Activated CD8-positive, alpha-beta memory T cell treated with anti-CD3 and anti-CD28 coated beads, Interleukin-2, amount 10 ng/mL, durations not matched to agents 7 days and 5 days (primary cell): ENCODE measurements at regions of chr1 and their contacts with region 1.

Region 1: GRCh38 chr1:43934101-43934985 is 742 bp downstream of the ARTN start:
- DNase-seq: peak; percentile 72
- ATAC-seq: peak; percentile 62
- H3K4me3 Mint-ChIP-seq: no peak overlapping the region
- H3K27ac Mint-ChIP-seq: peak overlapping the region; percentile 20
- H3K4me1 Mint-ChIP-seq: peaks cover 4% of the 10 kb centered on the region
- H3K27me3 Mint-ChIP-seq: peaks cover 24% of the 10 kb centered on the region

Region 2: DNA sequence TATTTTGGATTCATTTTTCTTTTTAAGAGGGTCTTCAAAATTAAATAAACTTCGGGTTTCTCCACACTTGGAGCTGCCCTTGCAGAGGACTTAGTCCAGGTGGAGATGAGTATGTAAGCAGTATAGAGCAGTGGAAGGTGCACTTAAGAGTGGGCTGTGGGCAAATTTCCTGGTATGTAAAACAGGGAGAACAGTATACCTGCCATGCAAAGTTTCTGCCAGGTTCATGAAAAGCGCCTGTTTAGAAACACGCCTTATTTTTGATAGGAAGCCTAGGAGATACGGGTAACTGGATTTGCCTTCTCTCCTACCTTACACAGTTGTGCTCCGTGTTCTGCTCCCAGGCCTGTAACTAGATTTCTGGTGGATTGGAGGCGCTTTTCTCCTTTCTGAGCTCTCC is 283.2 kb before region 1 on chr1:
- CTCF ChIA-PET with region 1: interaction called, 11 read pairs
- DNase-seq: no peak
- ATAC-seq: no peak
- H3K4me3 Mint-ChIP-seq: peak overlapping the region; percentile 92
- H3K27ac Mint-ChIP-seq: peak overlapping the region; percentile 59
- H3K4me1 Mint-ChIP-seq: peaks cover 44% of the 10 kb centered on the region
- H3K27me3 Mint-ChIP-seq: no peaks in the 10 kb centered on the region

Region 3: GRCh38 chr1:43763497-43763973 is 170.8 kb before region 1 on chr1:
- CTCF ChIA-PET with region 1: interaction called, 202 read pairs
- DNase-seq: peak; percentile 57
- ATAC-seq: peak; percentile 85
- H3K4me3 Mint-ChIP-seq: no peak overlapping the region
- H3K27ac Mint-ChIP-seq: no peak overlapping the region
- H3K4me1 Mint-ChIP-seq: no peaks in the 10 kb centered on the region
- H3K27me3 Mint-ChIP-seq: no peaks in the 10 kb centered on the region

Region 4: GRCh38 chr1:43832255-43832654 is 102.1 kb before region 1 on chr1:
- CTCF ChIA-PET with region 1: no interaction called
- DNase-seq: peak; percentile 46
- ATAC-seq: peak; percentile 74
- H3K4me3 Mint-ChIP-seq: no peak overlapping the region
- H3K27ac Mint-ChIP-seq: peak overlapping the region; percentile 3
- H3K4me1 Mint-ChIP-seq: peaks cover 51% of the 10 kb centered on the region
- H3K27me3 Mint-ChIP-seq: no peaks in the 10 kb centered on the region

Region 5: DNA sequence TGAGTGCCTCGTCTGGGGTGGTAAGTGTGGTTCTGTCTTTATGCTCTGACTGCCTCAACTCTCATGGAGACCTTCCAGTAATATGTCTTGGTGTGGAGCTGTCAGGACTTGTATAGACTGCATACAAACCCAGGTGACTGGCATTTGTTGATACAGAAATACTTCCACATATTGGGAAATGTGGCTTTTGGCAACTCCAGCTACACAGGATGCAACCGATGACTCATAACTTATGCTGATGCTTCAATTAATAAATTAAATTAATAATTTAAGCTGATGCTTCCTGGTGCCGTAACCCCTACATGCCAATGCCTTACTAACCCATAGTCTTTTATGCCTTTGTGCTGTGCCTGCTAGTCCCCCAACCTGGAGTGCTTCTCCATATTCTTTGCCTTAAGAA is 73.0 kb before region 1 on chr1:
- CTCF ChIA-PET with region 1: interaction called, 10 read pairs
- DNase-seq: no peak
- ATAC-seq: no peak
- H3K4me3 Mint-ChIP-seq: no peak overlapping the region
- H3K27ac Mint-ChIP-seq: no peak overlapping the region
- H3K4me1 Mint-ChIP-seq: peaks cover 19% of the 10 kb centered on the region
- H3K27me3 Mint-ChIP-seq: no peaks in the 10 kb centered on the region

Region 6: GRCh38 chr1:43974443-43975248 is 40.3 kb after region 1 on chr1 and contains the start of gene ATP6V0B:
- CTCF ChIA-PET with region 1: interaction called, 10 read pairs
- DNase-seq: peak; percentile 97
- ATAC-seq: peak; percentile 75
- H3K4me3 Mint-ChIP-seq: peak within 1 kb of the TSS; percentile 83
- H3K27ac Mint-ChIP-seq: peak within 1 kb of the TSS; percentile 90
- H3K4me1 Mint-ChIP-seq: peaks cover 56% of the 10 kb centered on the region
- H3K27me3 Mint-ChIP-seq: no peaks in the 10 kb centered on the region
- total RNA-seq, gene ATP6V0B: 108 to 139 TPM

Region 7: DNA sequence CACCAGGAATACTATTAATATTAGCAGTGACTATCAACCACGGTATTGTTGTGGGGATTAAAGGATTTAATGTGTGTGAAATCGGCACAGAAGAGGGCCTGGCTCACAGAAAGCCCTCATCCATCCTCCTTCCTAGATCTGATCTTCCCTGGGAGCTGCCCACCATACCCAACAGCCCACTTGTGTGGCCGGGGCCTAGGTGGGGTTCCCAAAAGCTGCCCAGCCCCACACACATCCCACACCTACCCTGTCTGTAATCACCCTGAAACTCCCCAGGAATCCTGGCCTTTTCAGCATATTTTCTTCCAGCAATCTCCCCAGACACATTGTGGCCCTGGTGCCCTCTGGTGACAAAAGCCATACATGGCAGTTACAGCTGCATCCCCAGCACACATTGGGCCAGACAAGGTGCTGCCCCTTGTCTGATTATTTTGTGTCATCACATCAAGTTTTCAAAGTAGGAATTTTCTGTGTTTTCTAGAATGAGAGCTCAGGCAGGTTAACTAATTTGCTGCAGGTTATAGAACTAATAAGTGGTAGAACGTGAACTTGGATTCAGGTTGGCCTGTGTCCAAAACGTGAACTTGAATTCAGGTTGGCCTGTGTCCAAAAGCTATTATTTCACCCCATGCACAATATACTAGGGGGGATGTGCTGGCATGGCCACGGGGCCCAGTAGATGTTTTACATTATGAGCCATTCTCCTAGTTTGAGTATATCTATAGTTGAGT is 102.2 kb after region 1 on chr1:
- CTCF ChIA-PET with region 1: interaction called, 12 read pairs
- DNase-seq: peak; percentile 77
- ATAC-seq: peak; percentile 72
- H3K4me3 Mint-ChIP-seq: no peak overlapping the region
- H3K27ac Mint-ChIP-seq: no peak overlapping the region
- H3K4me1 Mint-ChIP-seq: peaks cover 7% of the 10 kb centered on the region
- H3K27me3 Mint-ChIP-seq: peaks cover 7% of the 10 kb centered on the region

Region 8: GRCh38 chr1:44089371-44090049 is 155.2 kb after region 1 on chr1:
- CTCF ChIA-PET with region 1: no interaction called
- DNase-seq: no peak
- ATAC-seq: no peak
- H3K4me3 Mint-ChIP-seq: no peak overlapping the region
- H3K27ac Mint-ChIP-seq: no peak overlapping the region
- H3K4me1 Mint-ChIP-seq: no peaks in the 10 kb centered on the region
- H3K27me3 Mint-ChIP-seq: peaks cover 42% of the 10 kb centered on the region